ENCODE measurements at regions of chr7 and their contacts with region 1.

Region 1: DNA sequence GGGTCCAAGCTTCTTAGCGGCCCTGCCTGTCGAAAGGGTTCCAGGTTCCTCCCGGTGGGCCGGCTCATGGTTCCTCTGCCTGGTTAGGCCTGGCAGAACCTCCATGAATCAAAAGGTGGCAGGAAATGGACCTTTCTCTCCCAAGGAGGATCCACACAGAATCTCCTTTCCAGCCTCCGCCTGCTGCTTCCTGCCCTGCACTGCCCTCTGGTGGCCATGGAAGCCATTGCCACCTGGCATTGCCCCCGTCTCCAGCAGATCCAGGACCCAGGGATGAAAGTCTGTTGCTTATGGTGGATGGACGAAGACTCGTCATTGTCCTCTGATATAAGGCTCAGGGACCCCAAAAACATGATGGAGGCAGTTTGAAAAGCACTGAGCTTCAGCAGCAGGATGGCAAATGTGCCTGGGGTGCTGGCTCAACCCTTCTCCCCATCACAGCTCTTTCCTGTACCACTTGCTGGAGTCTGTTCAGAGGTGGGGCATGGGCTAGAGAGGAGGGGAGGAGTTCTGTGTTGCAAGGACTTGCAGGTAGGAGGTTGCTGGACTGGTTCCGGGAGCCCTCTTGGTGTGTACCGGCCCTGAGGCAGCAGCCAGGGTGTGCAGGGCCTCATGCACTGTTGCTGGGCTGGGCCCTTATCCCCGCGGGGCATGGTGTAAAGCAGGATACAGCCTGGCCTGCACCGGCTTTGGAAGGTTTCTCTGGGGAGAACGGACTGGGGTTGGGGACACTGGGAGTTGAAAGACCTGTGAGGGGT is 11.3 kb upstream of the INMT start:
- DNase-seq: peak in 1 of 2 donors; percentile 84
- H3K4me3 ChIP-seq: no peak overlapping the region
- H3K27ac ChIP-seq: no peak overlapping the region
- H3K4me1 ChIP-seq: no peaks in the 10 kb centered on the region
- H3K27me3 ChIP-seq: no peaks in the 10 kb centered on the region
- CTCF ChIP-seq: peak; percentile 89 to 99 (median 97)

Region 2: DNA sequence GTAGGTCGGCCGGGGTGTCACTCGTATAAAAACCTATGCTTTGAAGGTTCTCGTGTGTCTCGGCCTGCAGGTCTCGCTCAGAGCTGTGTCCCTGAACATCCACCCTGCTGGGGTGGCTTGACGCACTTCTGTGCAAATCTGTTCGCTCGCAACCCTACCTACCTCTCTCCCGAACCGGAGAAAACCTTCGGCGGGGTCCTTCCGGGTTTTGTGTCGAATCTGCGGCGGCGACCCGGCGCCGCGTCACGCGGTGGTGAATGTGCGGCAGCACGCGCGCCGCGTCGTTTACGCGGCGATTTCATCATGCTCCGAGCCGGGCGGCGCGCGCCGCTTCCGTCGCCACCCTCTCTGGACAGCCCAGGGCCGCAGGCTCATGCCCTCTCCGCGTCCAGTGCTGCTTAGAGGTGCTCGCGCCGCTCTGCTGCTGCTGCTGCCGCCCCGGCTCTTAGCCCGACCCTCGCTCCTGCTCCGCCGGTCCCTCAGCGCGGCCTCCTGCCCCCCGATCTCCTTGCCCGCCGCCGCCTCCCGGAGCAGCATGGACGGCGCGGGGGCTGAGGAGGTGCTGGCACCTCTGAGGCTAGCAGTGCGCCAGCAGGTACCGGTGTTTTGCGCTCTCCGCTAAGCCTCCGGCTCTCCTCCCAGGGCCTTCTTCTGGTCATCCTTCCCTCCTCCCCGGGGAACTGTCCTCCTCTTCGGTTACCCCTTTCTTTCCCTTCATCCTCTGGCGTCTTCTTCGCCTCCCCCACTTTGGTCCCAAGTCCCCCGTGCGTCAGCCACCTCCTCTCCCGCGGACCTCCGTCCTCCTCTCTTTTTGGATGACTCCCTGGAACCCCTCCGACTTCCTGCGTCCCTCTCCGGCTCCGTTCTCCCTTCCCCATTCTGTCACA is 145.8 kb before region 1 on chr7 and contains the start of gene GARS1:
- intact Hi-C with region 1: loop called (anchors 5 kb)
- DNase-seq: peak; percentile 65 to 94
- H3K4me3 ChIP-seq: peak within 1 kb of the TSS; percentile 86 to 96
- H3K27ac ChIP-seq: peak within 1 kb of the TSS; percentile 93 to 98
- H3K4me1 ChIP-seq: peaks cover 4 to 18% of the 10 kb centered on the region in 2 donors
- H3K27me3 ChIP-seq: no peaks in the 10 kb centered on the region
- CTCF ChIP-seq: no peak
- total RNA-seq, gene GARS1: 41.7 TPM

Region 3: DNA sequence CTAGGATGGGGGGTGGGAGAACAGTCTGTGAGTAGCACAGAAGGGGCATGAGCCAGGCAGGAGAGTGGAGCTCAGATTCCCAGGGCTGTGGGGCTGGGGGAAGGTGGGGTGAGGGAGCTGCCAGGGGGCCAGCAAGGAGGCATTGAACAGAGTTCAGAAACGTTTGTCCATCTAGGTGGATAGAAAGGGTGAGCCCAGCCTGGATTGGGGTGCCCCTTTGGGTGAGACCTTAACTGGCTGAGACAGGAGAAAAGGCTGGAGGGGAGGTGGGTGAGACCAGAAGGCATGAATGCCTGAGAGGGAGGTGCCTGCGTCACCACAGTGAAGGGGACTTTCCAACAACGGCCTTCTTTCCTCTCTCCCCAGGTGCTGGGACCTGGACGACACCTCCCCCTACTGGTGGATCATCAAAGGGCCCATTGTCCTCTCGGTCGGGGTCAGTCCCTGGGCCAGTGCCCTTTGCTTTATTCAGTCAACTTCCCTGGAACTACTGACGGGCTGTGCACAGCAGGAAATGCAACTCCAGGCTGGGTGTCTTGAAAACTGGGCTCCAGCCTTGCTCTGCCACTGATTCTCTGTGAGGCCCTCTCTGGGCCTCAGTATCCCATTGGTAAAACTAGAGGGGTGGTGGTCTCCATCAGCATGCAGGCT is 234.1 kb after region 1 on chr7:
- intact Hi-C with region 1: loop called (anchors 2 kb)
- DNase-seq: peak in 1 of 2 donors; percentile 73
- H3K4me3 ChIP-seq: no peak overlapping the region
- H3K27ac ChIP-seq: no peak overlapping the region
- H3K4me1 ChIP-seq: no peaks in the 10 kb centered on the region
- H3K27me3 ChIP-seq: no peaks in the 10 kb centered on the region
- CTCF ChIP-seq: peak; percentile 45 to 69 (median 52)

Region 4: GRCh38 chr7:31122649-31123058 is 382.1 kb after region 1 on chr7:
- intact Hi-C with region 1: loop called (anchors 1 kb)
- DNase-seq: peak in 1 of 2 donors; percentile 79
- H3K4me3 ChIP-seq: no peak overlapping the region
- H3K27ac ChIP-seq: no peak overlapping the region
- H3K4me1 ChIP-seq: no peaks in the 10 kb centered on the region
- H3K27me3 ChIP-seq: no peaks in the 10 kb centered on the region
- CTCF ChIP-seq: peak; percentile 59 to 81 (median 67)